AG04449 (cell line): ENCODE measurements at regions of chr4 and their contacts with region 1.

Region 1: DNA sequence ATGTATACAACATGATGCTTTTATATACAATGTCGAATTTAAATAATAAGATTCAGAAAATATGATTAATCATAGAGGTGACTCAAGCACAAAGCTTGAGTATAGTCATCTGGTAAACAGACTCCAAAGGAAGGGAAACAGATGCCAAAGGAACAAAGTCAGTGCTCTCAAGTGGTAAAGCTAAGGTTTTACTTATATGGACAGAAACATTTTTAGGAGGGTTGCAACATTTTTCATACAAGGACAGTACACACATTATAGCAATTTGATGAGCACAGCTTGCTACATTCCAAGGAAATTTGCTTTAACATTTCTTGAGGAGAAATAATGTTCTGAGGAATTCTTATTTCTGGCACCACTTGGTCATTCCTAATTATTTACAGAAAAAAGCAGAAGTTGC is 333.4 kb upstream of the AADAT start:
- DNase-seq: peak; percentile 96
- H3K4me3 ChIP-seq: no peak overlapping the region
- CTCF ChIP-seq: no peak

Region 2: DNA sequence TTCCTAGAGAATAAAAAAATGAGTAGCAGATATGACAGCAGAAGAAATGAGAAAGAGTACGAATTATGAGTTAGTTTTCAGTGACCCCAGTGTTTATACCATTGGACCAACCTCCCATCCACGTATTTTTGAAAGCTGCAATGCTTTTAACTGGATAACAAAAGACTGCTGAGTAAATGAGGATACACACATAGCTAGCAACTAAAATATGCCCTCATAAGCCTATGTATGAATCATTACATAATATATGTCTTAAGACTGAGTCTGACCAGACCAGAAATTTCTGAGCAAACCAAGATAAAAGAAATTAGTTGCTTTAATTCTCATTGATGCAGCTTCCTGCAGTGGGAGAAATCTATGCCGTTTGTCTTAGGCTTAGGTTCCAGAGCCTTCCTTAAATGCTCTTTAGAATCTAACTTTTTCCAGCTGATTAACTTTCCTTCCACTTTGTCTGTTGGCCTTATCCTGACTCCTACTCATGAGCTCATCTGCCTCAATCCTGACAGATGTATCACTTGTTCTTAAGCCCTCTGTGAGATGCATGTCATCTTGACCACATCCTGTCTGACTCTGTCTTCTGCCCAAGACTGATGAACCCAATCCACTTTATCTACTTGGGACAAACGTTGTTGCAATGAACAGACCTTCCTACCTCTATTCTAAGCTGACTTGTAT is 31.9 kb before region 1 on chr4:
- CTCF ChIA-PET with region 1: no interaction called
- POLR2A ChIA-PET with region 1: interaction called, 11 read pairs
- DNase-seq: peak; percentile 93
- H3K4me3 ChIP-seq: no peak overlapping the region
- CTCF ChIP-seq: no peak

Region 3: GRCh38 chr4:171049380-171049779 is 626.2 kb after region 1 on chr4:
- CTCF ChIA-PET with region 1: no interaction called
- POLR2A ChIA-PET with region 1: no interaction called
- DNase-seq: no peak
- H3K4me3 ChIP-seq: no peak overlapping the region
- CTCF ChIP-seq: no peak